Gastrocnemius medialis (tissue), 4 donors: ENCODE measurements at regions of chr3 and their contacts with region 1.

Region 1: GRCh38 chr3:120417272-120417911 is 33.4 kb downstream of the FSTL1 start:
- DNase-seq: peak; percentile 82 to 91
- ATAC-seq: peak; percentile 99
- H3K4me3 ChIP-seq: peak overlapping the region; percentile 31 to 54 (median 46)
- H3K27ac ChIP-seq: peak overlapping the region; percentile 21 to 68 (median 58)
- H3K4me1 ChIP-seq: peaks cover 34 to 41% of the 10 kb centered on the region in 2 donors
- H3K27me3 ChIP-seq: no peaks in the 10 kb centered on the region
- CTCF ChIP-seq: peak; percentile 82 to 92 (median 86)
- POLR2A ChIP-seq: peak in 1 of 2 donors; percentile 52

Region 2: DNA sequence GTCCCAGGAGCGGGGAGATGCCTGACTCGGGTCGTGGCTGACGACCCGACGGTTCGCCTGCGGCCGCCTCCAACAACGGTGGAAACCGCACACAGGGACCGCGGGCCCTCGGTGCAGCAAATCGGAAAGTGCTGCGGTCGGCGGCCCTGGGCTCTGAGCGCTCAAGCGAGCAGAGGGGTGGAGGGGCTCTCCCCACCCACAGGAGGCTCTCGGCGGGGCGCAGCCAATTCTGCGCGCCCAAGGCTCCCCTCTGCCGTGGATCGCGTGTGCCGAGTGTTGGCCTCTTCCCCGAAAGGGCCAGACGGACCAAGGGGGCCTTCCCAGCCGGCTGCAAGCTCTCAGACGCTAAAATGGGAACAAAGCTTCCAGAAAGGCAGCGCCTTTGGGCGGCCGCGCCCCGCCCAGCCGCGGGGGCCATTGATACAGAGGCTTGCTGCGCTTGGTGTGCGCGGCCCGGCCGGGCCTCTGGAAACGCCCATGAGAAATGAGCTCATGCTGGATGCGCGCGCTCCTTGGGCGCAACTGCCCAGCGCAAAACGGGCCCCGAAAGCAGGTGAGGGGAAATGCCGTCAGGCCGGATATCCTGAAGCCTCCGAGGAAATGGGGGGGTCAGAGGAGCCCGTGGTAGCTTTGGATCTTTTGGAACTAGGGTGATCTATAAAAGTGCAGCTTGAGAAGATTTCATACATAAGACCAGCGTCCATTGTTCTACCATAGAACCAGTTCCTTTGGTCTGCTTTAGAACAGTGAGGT is 322.0 kb before region 1 on chr3:
- in situ Hi-C with region 1: no loop called
- intact Hi-C with region 1: loop called (anchors 5 kb)
- DNase-seq: peak; percentile 74 to 87
- ATAC-seq: peak; percentile 34 to 37
- H3K4me3 ChIP-seq: peak overlapping the region; percentile 65 to 94 (median 90)
- H3K27ac ChIP-seq: peak overlapping the region; percentile 90 to 99 (median 98)
- H3K4me1 ChIP-seq: peaks cover 20 to 31% of the 10 kb centered on the region in 2 donors
- H3K27me3 ChIP-seq: no peaks in the 10 kb centered on the region
- CTCF ChIP-seq: peak in 1 of 5 experiments; percentile 3
- POLR2A ChIP-seq: peak; percentile 81 to 92

Region 3: DNA sequence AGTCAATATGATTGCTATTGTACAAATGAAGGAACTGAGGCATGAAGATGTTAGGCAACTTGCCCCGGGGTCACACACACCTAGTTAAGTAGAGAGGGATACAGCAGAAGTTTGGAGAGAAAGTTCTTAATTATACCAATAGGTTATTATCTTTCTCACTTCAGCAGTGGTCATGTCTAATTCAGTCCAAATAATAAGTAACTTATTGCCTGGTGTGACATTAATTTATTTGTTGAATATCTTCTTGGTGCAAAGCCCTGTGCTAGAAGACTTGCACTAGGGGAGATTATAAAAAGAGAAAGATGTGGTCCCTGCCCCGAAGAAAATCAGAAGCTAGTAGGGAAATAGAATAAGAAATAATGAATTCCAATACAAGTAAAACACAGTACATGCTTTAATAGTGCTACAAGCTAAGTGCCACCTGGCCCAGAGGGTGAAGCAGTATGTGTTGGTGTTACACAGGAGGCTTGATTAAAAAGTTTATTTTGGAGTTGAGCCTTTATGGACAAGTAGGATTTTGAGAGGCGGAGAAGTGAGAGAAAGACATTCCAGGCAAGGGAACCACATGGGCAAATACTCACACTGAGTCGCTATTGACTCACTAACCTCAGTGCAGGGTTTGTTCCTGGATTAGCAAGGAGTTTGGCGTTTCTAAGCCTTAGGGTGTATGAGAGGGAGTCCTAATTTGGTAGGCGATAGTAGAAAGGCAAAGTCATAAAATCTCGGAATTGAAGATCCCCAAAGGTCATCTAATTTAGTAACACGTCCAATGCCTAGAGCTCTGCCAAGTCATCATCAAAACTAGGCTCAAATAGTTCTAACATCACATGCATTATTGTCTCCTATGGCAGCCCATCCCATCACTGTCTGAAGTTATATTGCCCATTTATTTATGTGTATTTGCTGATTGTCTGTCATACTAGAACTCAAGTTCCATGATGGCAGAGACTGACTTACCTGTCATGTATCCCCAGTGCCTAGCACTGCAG is 304.0 kb before region 1 on chr3:
- in situ Hi-C with region 1: no loop called
- intact Hi-C with region 1: no loop called
- DNase-seq: no peak
- ATAC-seq: no peak
- H3K4me3 ChIP-seq: no peak overlapping the region
- H3K27ac ChIP-seq: no peak overlapping the region
- H3K4me1 ChIP-seq: no peaks in the 10 kb centered on the region
- H3K27me3 ChIP-seq: no peaks in the 10 kb centered on the region
- CTCF ChIP-seq: no peak
- POLR2A ChIP-seq: no peak

Region 4: GRCh38 chr3:120245386-120245785 is 172.0 kb before region 1 on chr3:
- in situ Hi-C with region 1: loop called in 3 of 4 experiments (anchors 5 to 10 kb)
- intact Hi-C with region 1: loop called (anchors 1 kb)
- DNase-seq: no peak
- ATAC-seq: no peak
- H3K4me3 ChIP-seq: no peak overlapping the region
- H3K27ac ChIP-seq: no peak overlapping the region
- H3K4me1 ChIP-seq: no peaks in the 10 kb centered on the region
- H3K27me3 ChIP-seq: no peaks in the 10 kb centered on the region
- CTCF ChIP-seq: no peak
- POLR2A ChIP-seq: no peak

Region 5: GRCh38 chr3:120348981-120349818 is 68.2 kb before region 1 on chr3 and contains the start of gene LRRC58:
- in situ Hi-C with region 1: no loop called
- intact Hi-C with region 1: loop called (anchors 2 kb)
- DNase-seq: peak; percentile 82 to 93
- ATAC-seq: peak; percentile 88 to 93
- H3K4me3 ChIP-seq: peak within 1 kb of the TSS; percentile 77 to 95 (median 85)
- H3K27ac ChIP-seq: peak within 1 kb of the TSS; percentile 88 to 93 (median 90)
- H3K4me1 ChIP-seq: peaks cover 20 to 43% of the 10 kb centered on the region in 2 donors
- H3K27me3 ChIP-seq: no peaks in the 10 kb centered on the region
- CTCF ChIP-seq: peak in 4 of 5 experiments; percentile 14 to 48 (median 28)
- POLR2A ChIP-seq: peak; percentile 92 to 95
- total RNA-seq, gene LRRC58: 8.4 to 15.2 (median 13.6) TPM

Region 6: GRCh38 chr3:120469447-120469846 is 52.1 kb after region 1 on chr3:
- in situ Hi-C with region 1: no loop called
- intact Hi-C with region 1: no loop called
- DNase-seq: no peak
- ATAC-seq: no peak
- H3K4me3 ChIP-seq: no peak overlapping the region
- H3K27ac ChIP-seq: no peak overlapping the region
- H3K4me1 ChIP-seq: no peaks in the 10 kb centered on the region
- H3K27me3 ChIP-seq: no peaks in the 10 kb centered on the region
- CTCF ChIP-seq: no peak
- POLR2A ChIP-seq: no peak

Region 7: GRCh38 chr3:120506828-120507774 is 89.7 kb after region 1 on chr3:
- in situ Hi-C with region 1: no loop called
- intact Hi-C with region 1: loop called (anchors 2 kb)
- DNase-seq: peak in 1 of 2 donors; percentile 15
- ATAC-seq: peak in 1 of 2 donors; percentile 52
- H3K4me3 ChIP-seq: no peak overlapping the region
- H3K27ac ChIP-seq: no peak overlapping the region
- H3K4me1 ChIP-seq: peaks cover 0 to 3% of the 10 kb centered on the region in 2 donors
- H3K27me3 ChIP-seq: no peaks in the 10 kb centered on the region
- CTCF ChIP-seq: peak in 4 of 5 experiments; percentile 37 to 58 (median 48)
- POLR2A ChIP-seq: no peak

Region 8: GRCh38 chr3:120558771-120559241 is 141.4 kb after region 1 on chr3:
- in situ Hi-C with region 1: no loop called
- intact Hi-C with region 1: loop called (anchors 1 kb)
- DNase-seq: peak; percentile 64 to 77
- ATAC-seq: peak; percentile 70 to 82
- H3K4me3 ChIP-seq: peak overlapping the region; percentile 52 to 60 (median 58)
- H3K27ac ChIP-seq: peak overlapping the region; percentile 51 to 78 (median 64)
- H3K4me1 ChIP-seq: peaks cover 18 to 33% of the 10 kb centered on the region in 2 donors
- H3K27me3 ChIP-seq: no peaks in the 10 kb centered on the region
- CTCF ChIP-seq: peak; percentile 92 to 99 (median 92)
- POLR2A ChIP-seq: no peak